IMR-90 (cell line): ENCODE measurements at regions of chr3 and their contacts with region 1.

Region 1: DNA sequence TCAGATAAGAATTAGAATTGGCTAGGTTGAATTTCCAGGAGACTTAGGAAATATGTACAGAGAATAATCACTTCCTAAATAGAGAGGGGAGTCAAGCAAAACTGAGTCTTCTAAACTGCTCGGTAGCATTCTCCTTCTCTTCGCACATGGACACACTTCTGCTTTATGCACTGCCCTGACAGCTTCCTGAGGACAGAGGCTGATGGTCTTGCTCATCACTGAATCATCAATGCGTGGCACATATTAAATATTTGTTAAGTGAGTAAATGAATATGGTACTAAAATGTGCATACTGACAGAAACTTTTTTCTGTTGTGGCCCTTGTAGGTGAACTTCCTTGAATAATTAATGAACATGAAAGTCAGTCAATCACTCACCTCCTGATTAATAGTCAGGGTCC is 315.5 kb downstream of the FHIT start:
- DNase-seq: peak; percentile 66
- ATAC-seq: peak; percentile 67
- H3K4me3 ChIP-seq: no peak overlapping the region
- H3K27ac ChIP-seq: no peak overlapping the region
- H3K4me1 ChIP-seq: no peaks in the 10 kb centered on the region
- H3K27me3 ChIP-seq: no peaks in the 10 kb centered on the region
- CTCF ChIP-seq: no peak
- POLR2A ChIP-seq: no peak
- RAD21 ChIP-seq: no peak

Region 2: DNA sequence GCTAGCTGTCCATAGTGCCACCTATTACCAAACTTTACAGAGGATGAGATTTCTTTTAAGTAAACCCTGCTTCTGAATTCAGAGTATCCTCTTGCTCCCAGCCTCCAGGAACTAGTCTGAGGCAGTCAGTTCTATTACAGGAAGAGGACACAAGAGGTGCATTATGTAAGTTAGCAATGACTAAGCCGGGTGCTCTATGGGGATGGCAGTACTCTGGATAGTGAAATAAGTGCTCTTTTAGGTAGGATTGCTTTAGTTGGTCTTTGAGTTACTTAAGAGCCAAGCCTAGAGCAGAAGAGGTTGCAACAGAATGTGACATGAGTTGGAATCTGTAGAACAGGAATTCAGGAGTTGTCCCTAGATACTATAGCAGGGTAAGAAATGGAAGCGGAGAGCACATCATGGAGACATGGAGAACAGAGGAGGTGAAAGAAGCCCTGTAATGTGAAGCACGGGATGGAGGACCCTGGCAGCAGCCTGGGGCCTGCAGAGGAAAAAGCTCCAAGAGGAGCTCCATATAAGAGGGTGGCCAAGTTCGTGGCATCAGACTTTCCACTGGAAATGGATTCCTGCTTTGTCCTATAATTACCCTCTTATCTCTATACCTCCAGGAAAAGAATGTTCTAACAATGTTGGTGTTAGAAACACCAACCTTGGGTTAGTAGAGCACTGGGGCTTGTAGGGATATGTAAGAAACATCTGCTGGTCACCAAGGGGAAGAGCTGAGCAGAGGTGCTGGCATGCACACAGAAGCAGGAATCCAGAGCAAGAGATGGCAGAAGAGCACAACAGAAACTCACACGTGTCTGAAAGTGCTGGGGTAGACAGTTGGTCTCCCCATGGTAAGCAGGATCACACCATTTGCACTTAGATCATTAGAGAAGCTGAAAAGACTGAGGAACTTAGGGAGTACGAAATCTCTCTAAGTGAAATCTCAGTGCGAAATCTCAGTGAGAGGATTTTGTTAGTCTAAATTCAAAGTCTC is 535.6 kb before region 1 on chr3:
- CTCF ChIA-PET with region 1: no interaction called
- POLR2A ChIA-PET with region 1: no interaction called
- dilution Hi-C with region 1: no loop called
- in situ Hi-C with region 1: no loop called
- intact Hi-C with region 1: no loop called
- DNase-seq: peak; percentile 3
- ATAC-seq: no peak
- H3K4me3 ChIP-seq: no peak overlapping the region
- H3K27ac ChIP-seq: no peak overlapping the region
- H3K4me1 ChIP-seq: no peaks in the 10 kb centered on the region
- H3K27me3 ChIP-seq: no peaks in the 10 kb centered on the region
- CTCF ChIP-seq: no peak
- POLR2A ChIP-seq: no peak
- RAD21 ChIP-seq: no peak

Region 3: GRCh38 chr3:60967141-60967540 is 31.4 kb after region 1 on chr3:
- CTCF ChIA-PET with region 1: no interaction called
- POLR2A ChIA-PET with region 1: no interaction called
- dilution Hi-C with region 1: no loop called
- in situ Hi-C with region 1: no loop called
- intact Hi-C with region 1: loop called (anchors 1 kb)
- DNase-seq: no peak
- ATAC-seq: no peak
- H3K4me3 ChIP-seq: no peak overlapping the region
- H3K27ac ChIP-seq: no peak overlapping the region
- H3K4me1 ChIP-seq: no peaks in the 10 kb centered on the region
- H3K27me3 ChIP-seq: no peaks in the 10 kb centered on the region
- CTCF ChIP-seq: no peak
- POLR2A ChIP-seq: no peak
- RAD21 ChIP-seq: no peak